ENCODE measurements at regions of chr12 and their contacts with region 1.

Region 1: GRCh38 chr12:121678716-121679580 is 9.5 kb upstream of the MORN3 start:
- DNase-seq: no peak
- H3K4me3 ChIP-seq: no peak overlapping the region
- H3K27ac ChIP-seq: no peak overlapping the region
- H3K4me1 ChIP-seq: peaks cover 0 to 6% (median 2%) of the 10 kb centered on the region in 4 donors
- H3K27me3 ChIP-seq: no peaks in the 10 kb centered on the region
- CTCF ChIP-seq: no peak
- EP300 ChIP-seq: no peak
- POLR2A ChIP-seq: no peak

Region 2: GRCh38 chr12:121499929-121500793 is 178.8 kb before region 1 on chr12:
- intact Hi-C with region 1: loop called (anchors 5 kb)
- DNase-seq: peak; percentile 84 to 90
- H3K4me3 ChIP-seq: peak overlapping the region in 3 of 4 donors; percentile 7 to 27 (median 16)
- H3K27ac ChIP-seq: peak overlapping the region in 4 of 5 donors; percentile 18 to 66 (median 53)
- H3K4me1 ChIP-seq: peaks cover 0 to 14% (median 10%) of the 10 kb centered on the region in 4 donors
- H3K27me3 ChIP-seq: no peaks in the 10 kb centered on the region
- CTCF ChIP-seq: peak in 5 of 7 experiments; percentile 65 to 99 (median 95)
- EP300 ChIP-seq: no peak
- POLR2A ChIP-seq: no peak

Region 3: GRCh38 chr12:121550974-121551634 is 127.8 kb before region 1 on chr12:
- intact Hi-C with region 1: loop called (anchors 5 kb)
- DNase-seq: no peak
- H3K4me3 ChIP-seq: no peak overlapping the region
- H3K27ac ChIP-seq: no peak overlapping the region
- H3K4me1 ChIP-seq: peaks cover 0 to 9% (median 3%) of the 10 kb centered on the region in 4 donors
- H3K27me3 ChIP-seq: no peaks in the 10 kb centered on the region
- CTCF ChIP-seq: no peak
- EP300 ChIP-seq: no peak
- POLR2A ChIP-seq: no peak

Measured in stomach (tissue), 19 donors.